ENCODE measurements at regions of chr12 and their contacts with region 1.

Region 1: GRCh38 chr12:56266693-56267442 is at the start of gene COQ10A:
- DNase-seq: peak; percentile 77 to 95 (median 92)
- ATAC-seq: peak; percentile 87
- H3K4me3 ChIP-seq: peak within 1 kb of the TSS; percentile 87 to 89
- H3K4me3 Mint-ChIP-seq: peak within 1 kb of the TSS; percentile 92
- H3K27ac ChIP-seq: peak within 1 kb of the TSS; percentile 95 to 98
- H3K27ac Mint-ChIP-seq: peak within 1 kb of the TSS; percentile 92
- H3K4me1 ChIP-seq: peaks cover 12% of the 10 kb centered on the region
- H3K4me1 Mint-ChIP-seq: peaks cover 20% of the 10 kb centered on the region
- H3K27me3 ChIP-seq: no peaks in the 10 kb centered on the region
- H3K27me3 Mint-ChIP-seq: no peaks in the 10 kb centered on the region
- CTCF ChIP-seq: peak; percentile 66
- total RNA-seq, gene COQ10A: 29.5 to 38.8 TPM

Region 2: GRCh38 chr12:56307221-56307965 is 40.5 kb after region 1 on chr12:
- CTCF ChIA-PET with region 1: interaction called, 13 read pairs
- POLR2A ChIA-PET with region 1: no interaction called
- intact Hi-C with region 1: no loop called
- DNase-seq: no peak
- ATAC-seq: no peak
- H3K4me3 ChIP-seq: no peak overlapping the region
- H3K4me3 Mint-ChIP-seq: no peak overlapping the region
- H3K27ac ChIP-seq: no peak overlapping the region
- H3K27ac Mint-ChIP-seq: peak overlapping the region; percentile 41
- H3K4me1 ChIP-seq: peaks cover 2% of the 10 kb centered on the region
- H3K4me1 Mint-ChIP-seq: peaks cover under 1% of the 10 kb centered on the region
- H3K27me3 ChIP-seq: no peaks in the 10 kb centered on the region
- H3K27me3 Mint-ChIP-seq: no peaks in the 10 kb centered on the region
- CTCF ChIP-seq: no peak

Measured in CD8-positive, alpha-beta T cell (primary cell).